Calu3 (cell line): ENCODE measurements at regions of chr18 and their contacts with region 1.

Region 1: DNA sequence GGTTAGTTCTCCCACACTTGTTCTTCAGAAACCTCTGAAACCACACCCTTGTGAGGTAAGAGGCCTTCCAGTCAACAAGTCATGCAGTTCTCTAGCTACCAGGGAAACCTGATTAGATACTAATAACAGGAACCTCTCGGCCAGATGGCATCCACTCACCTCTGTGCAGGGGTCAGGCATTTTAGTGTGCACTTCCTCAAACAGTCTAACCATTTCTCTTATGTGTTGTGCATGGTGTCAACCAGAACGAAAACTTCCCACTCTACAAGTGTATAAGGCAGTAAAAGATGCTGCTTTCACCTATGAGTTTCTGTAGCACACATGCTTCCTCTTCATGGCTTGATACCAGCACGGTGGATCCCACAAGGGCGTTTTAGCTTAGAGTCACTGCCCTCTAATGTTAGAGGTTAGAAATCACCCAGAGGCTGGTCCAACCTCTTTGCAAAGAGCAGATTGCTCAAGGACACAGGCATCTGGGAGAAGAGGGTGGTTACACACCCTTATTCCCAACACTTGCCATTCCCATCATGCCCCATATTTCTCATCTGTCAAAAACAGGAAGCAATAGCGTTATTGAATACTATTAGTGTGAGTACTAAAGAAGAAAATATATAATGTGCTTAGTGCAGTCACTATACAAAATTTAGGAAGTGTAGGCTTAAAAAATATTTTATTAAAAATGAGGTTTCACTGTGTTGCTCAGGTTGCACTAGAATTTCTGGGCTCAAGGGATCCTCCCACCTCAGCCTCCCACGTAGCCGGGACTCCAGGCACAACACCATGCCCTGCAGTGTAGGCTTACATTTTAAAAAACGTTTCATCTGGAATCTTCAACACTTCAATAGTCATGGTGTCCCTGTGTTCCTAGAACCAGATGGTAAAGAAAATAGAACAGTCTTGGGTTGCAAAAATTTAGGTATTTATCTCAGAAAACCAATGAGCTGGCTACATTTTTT is 34.5 kb upstream of the RAB31 start:
- DNase-seq: peak; percentile 81
- H3K4me3 Mint-ChIP-seq: peak overlapping the region; percentile 62
- H3K27ac Mint-ChIP-seq: peak overlapping the region; percentile 98
- H3K4me1 Mint-ChIP-seq: peaks cover 24% of the 10 kb centered on the region
- H3K27me3 Mint-ChIP-seq: no peaks in the 10 kb centered on the region
- CTCF ChIP-seq: no peak

Region 2: GRCh38 chr18:9048808-9049494 is 624.6 kb before region 1 on chr18:
- CTCF ChIA-PET with region 1: no interaction called
- intact Hi-C with region 1: no loop called
- DNase-seq: no peak
- H3K4me3 Mint-ChIP-seq: no peak overlapping the region
- H3K27ac Mint-ChIP-seq: no peak overlapping the region
- H3K4me1 Mint-ChIP-seq: no peaks in the 10 kb centered on the region
- H3K27me3 Mint-ChIP-seq: no peaks in the 10 kb centered on the region
- CTCF ChIP-seq: no peak

Region 3: DNA sequence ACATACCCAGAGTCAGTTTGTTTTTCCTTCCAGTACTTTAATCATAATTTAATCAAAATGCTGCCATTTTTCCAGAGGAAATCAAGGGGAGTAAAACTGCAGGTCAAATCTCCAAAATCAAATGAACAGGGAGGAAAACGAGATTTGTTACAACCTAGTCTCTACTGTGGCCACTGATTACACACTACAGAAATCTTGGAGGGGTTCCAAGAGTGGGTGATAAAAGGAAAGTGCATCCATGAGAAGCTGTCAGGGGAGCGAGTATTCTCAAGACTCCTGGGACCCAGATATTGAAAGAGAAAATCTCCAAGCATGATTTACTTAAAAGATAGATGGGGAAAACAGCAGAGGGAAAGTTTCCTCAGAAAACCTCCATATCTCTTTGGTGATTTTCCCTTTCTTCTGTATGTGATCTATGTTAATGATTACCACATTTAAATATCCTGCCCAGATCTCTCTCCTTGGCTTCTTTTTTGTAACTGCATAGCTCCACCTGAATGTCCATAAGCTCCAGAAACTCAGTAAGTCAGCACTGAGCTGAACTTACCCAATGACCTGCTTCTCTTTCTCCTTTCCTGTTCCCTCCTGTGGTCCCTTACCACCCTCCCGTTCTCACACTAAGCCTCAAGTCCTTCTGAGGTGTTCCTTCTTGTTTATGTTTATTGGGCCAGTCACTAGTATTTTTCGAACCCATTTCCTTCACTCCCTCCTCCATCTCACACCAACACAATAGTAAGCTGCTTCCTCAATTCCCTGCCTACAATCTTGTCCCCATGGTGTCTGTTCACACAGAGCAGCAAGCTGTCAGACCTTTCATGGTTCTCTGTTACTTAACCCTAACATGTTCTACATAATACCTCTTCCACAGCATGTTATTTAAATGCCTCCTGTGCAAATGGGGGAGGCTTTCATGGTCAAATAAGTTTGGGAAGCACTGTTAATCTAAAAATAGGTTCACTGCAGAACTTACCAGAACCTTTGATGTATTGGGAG is 412.9 kb before region 1 on chr18:
- CTCF ChIA-PET with region 1: no interaction called
- intact Hi-C with region 1: no loop called
- DNase-seq: no peak
- H3K4me3 Mint-ChIP-seq: no peak overlapping the region
- H3K27ac Mint-ChIP-seq: no peak overlapping the region
- H3K4me1 Mint-ChIP-seq: no peaks in the 10 kb centered on the region
- H3K27me3 Mint-ChIP-seq: no peaks in the 10 kb centered on the region
- CTCF ChIP-seq: no peak

Region 4: DNA sequence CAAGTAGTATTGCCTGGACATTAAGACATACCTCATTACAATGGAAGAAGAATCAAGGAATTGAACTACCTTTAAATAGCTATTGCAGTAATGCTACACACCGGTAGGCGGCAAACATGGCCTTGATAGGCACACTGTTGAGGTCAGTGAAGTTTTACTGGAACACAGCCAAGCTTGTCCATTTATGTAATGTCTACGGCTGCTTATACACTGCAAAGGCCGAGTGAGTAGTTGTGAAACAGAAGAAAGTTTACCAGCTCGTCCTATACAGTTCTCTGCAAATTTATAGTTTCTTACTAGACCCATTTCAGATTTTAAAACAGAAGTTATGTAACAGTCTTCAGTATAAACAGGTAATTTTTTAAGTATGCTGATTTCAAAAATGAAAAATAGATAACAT is 98.0 kb before region 1 on chr18:
- CTCF ChIA-PET with region 1: interaction called, 21 read pairs
- intact Hi-C with region 1: loop called (anchors 2 kb)
- DNase-seq: peak; percentile 84
- H3K4me3 Mint-ChIP-seq: no peak overlapping the region
- H3K27ac Mint-ChIP-seq: peak overlapping the region; percentile 42
- H3K4me1 Mint-ChIP-seq: peaks cover 12% of the 10 kb centered on the region
- H3K27me3 Mint-ChIP-seq: no peaks in the 10 kb centered on the region
- CTCF ChIP-seq: peak; percentile 84

Region 5: DNA sequence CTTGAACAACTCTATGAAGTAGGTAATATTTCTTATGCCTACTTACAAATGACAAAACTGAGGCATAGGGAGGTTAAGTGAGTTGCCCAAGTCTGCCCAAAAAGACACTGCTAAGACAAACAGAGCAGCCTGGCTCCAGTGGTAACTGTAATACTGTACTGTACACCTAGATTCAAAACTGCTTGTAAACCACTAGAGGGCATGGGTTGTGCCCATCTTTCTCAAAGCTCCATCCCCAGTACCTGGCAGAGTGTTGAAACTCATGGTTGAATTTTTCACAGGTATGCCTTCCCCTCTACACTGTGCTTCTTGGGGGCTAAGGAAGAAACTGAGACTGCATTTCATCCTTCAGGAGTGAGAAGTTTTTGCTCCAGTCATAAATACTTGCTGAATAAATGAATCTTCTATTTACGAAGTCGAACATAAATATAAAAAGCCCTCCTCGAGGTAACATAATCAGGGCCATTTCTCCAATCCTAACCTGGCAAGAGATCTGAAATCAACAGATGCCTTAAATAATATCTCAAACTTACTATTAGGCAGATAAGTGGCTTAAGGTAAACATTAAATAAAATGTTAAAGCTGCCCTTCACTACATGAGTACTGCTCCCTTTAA is 61.3 kb before region 1 on chr18:
- CTCF ChIA-PET with region 1: interaction called, 25 read pairs
- intact Hi-C with region 1: loop called (anchors 1 kb)
- DNase-seq: peak; percentile 56
- H3K4me3 Mint-ChIP-seq: peak overlapping the region; percentile 99
- H3K27ac Mint-ChIP-seq: peak overlapping the region; percentile 97
- H3K4me1 Mint-ChIP-seq: peaks cover 54% of the 10 kb centered on the region
- H3K27me3 Mint-ChIP-seq: no peaks in the 10 kb centered on the region
- CTCF ChIP-seq: peak; percentile 57

Region 6: GRCh38 chr18:9643549-9643948 is 30.0 kb before region 1 on chr18:
- CTCF ChIA-PET with region 1: interaction called, 4 read pairs
- intact Hi-C with region 1: loop called (anchors 1 kb)
- DNase-seq: peak; percentile 74
- H3K4me3 Mint-ChIP-seq: no peak overlapping the region
- H3K27ac Mint-ChIP-seq: peak overlapping the region; percentile 90
- H3K4me1 Mint-ChIP-seq: peaks cover 14% of the 10 kb centered on the region
- H3K27me3 Mint-ChIP-seq: no peaks in the 10 kb centered on the region
- CTCF ChIP-seq: no peak

Region 7: DNA sequence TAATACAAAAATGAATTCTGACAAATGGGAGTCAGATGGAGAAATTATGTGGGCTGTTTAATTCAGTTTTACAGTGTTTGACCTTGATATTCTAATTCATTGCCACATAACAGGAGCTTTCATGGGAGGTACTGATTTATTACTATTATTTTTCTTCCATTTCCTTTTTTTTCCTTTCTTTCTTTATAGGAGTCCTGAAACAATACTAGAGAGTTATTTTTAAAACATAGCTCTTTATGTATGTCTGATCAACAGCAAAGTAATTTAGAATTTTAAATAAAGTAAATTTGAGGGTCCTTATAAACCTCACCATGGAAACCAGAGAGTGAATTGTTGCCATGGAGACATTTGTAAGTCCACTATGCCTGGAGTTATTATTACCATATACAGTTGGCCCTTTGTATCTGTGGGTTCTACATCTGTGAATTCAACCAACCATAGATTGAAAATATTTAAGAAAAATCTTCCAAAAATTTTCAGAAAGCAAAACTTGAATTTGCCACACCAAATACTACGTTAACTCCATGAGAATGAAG is 18.3 kb before region 1 on chr18:
- CTCF ChIA-PET with region 1: interaction called, 3 read pairs
- intact Hi-C with region 1: loop called (anchors 2 kb)
- DNase-seq: no peak
- H3K4me3 Mint-ChIP-seq: no peak overlapping the region
- H3K27ac Mint-ChIP-seq: no peak overlapping the region
- H3K4me1 Mint-ChIP-seq: peaks cover 18% of the 10 kb centered on the region
- H3K27me3 Mint-ChIP-seq: no peaks in the 10 kb centered on the region
- CTCF ChIP-seq: no peak